Natural killer cell (primary cell): ENCODE measurements at regions of chr17 and their contacts with region 1.

Region 1: DNA sequence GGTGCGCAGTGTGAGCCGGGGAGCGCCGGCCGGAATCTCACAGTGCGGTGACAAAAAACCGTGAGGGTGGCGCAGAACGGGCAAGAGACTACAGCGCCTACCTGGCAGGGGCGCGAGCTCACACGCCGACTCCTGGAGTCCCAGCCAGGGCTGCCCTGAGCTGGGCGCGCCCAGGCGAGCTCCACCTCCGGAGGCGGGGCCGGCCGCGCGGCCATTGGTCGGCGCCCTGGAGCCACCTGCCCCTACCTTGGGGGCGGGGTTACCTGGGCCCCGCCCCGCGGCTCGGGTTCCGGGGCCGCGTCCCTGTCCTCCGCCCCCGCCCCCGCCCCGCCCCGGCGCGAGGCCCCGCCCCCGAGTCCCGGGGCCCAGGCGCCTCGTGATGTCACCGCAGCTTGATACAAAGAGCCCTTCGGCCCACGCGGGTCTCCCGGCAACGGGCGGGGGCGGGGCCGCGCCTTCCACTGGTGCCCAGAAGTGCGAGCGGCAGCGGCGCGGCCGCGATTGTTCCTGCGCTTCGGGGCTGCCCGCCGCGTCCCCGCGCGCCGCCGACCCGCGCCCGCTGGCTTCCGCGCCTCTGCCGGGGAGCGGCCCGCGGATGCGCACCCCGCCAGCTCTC is 96.3 kb downstream of the RAB11FIP4 start:
- DNase-seq: peak; percentile 92 to 98
- ATAC-seq: peak; percentile 88 to 96 (median 89)
- H3K4me3 ChIP-seq: peak overlapping the region; percentile 74
- H3K4me3 Mint-ChIP-seq: peak overlapping the region; percentile 91
- H3K27ac ChIP-seq: peak overlapping the region; percentile 69
- H3K27ac Mint-ChIP-seq: peak overlapping the region; percentile 89 to 97
- H3K4me1 ChIP-seq: peaks cover 54% of the 10 kb centered on the region
- H3K4me1 Mint-ChIP-seq: peaks cover 46 to 51% of the 10 kb centered on the region in 2 donors
- H3K27me3 ChIP-seq: no peaks in the 10 kb centered on the region
- H3K27me3 Mint-ChIP-seq: no peaks in the 10 kb centered on the region
- CTCF ChIP-seq: no peak

Region 2: GRCh38 chr17:31437720-31438420 is 49.9 kb before region 1 on chr17:
- intact Hi-C with region 1: loop called (anchors 2 kb)
- DNase-seq: no peak
- ATAC-seq: no peak
- H3K4me3 ChIP-seq: no peak overlapping the region
- H3K4me3 Mint-ChIP-seq: no peak overlapping the region
- H3K27ac ChIP-seq: no peak overlapping the region
- H3K27ac Mint-ChIP-seq: no peak overlapping the region
- H3K4me1 ChIP-seq: peaks cover 20% of the 10 kb centered on the region
- H3K4me1 Mint-ChIP-seq: peaks cover 6 to 16% of the 10 kb centered on the region in 2 donors
- H3K27me3 ChIP-seq: no peaks in the 10 kb centered on the region
- H3K27me3 Mint-ChIP-seq: peaks cover 0 to 7% of the 10 kb centered on the region in 2 donors
- CTCF ChIP-seq: no peak

Region 3: GRCh38 chr17:31452101-31452500 is 35.7 kb before region 1 on chr17:
- intact Hi-C with region 1: no loop called
- DNase-seq: no peak
- ATAC-seq: no peak
- H3K4me3 ChIP-seq: no peak overlapping the region
- H3K4me3 Mint-ChIP-seq: no peak overlapping the region
- H3K27ac ChIP-seq: no peak overlapping the region
- H3K27ac Mint-ChIP-seq: no peak overlapping the region
- H3K4me1 ChIP-seq: peaks cover 9% of the 10 kb centered on the region
- H3K4me1 Mint-ChIP-seq: no peaks in the 10 kb centered on the region
- H3K27me3 ChIP-seq: no peaks in the 10 kb centered on the region
- H3K27me3 Mint-ChIP-seq: peaks cover 0 to 8% of the 10 kb centered on the region in 2 donors
- CTCF ChIP-seq: no peak

Region 4: DNA sequence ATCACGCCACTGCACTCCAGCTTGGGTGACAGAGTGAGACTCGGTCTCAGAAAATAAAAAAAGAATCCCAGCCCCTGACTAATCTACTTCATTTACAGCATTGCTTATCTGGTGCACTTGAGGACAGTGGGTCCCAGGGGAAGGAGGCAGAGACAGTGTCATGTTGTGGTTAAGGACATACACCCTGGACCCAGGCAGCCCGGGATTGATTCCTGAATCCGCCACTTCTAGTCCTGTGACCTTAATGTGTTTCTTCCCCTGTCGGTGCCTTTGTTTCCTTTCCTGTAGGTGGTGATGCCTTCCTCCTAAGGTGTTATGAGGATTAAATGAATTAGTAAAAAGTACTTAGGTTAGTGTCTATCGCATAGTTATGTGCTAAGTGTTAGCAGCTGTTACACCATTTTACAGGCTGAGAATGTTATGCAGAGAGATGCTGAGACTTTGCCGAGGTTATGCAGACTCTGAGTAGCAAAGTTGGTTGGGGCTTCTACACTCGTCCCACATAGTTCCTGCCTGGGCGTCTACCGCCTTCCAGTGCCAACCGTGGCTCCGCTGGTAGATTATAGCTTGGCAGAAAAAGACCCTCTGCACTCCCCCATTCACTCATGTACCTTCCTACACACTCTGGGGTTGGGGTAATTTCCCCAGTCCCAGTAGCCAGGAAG is 21.5 kb before region 1 on chr17:
- intact Hi-C with region 1: no loop called
- DNase-seq: no peak
- ATAC-seq: no peak
- H3K4me3 ChIP-seq: no peak overlapping the region
- H3K4me3 Mint-ChIP-seq: no peak overlapping the region
- H3K27ac ChIP-seq: no peak overlapping the region
- H3K27ac Mint-ChIP-seq: no peak overlapping the region
- H3K4me1 ChIP-seq: peaks cover 31% of the 10 kb centered on the region
- H3K4me1 Mint-ChIP-seq: peaks cover 6 to 14% of the 10 kb centered on the region in 2 donors
- H3K27me3 ChIP-seq: no peaks in the 10 kb centered on the region
- H3K27me3 Mint-ChIP-seq: no peaks in the 10 kb centered on the region
- CTCF ChIP-seq: no peak

Region 5: GRCh38 chr17:31508288-31509094 is 20.7 kb after region 1 on chr17:
- intact Hi-C with region 1: loop called (anchors 1 kb)
- DNase-seq: peak; percentile 64 to 92
- ATAC-seq: peak; percentile 84 to 97 (median 90)
- H3K4me3 ChIP-seq: peak overlapping the region; percentile 27
- H3K4me3 Mint-ChIP-seq: peak overlapping the region; percentile 95
- H3K27ac ChIP-seq: peak overlapping the region; percentile 96
- H3K27ac Mint-ChIP-seq: peak overlapping the region; percentile 96 to 97
- H3K4me1 ChIP-seq: peaks cover 69% of the 10 kb centered on the region
- H3K4me1 Mint-ChIP-seq: peaks cover 60 to 68% of the 10 kb centered on the region in 2 donors
- H3K27me3 ChIP-seq: no peaks in the 10 kb centered on the region
- H3K27me3 Mint-ChIP-seq: no peaks in the 10 kb centered on the region
- CTCF ChIP-seq: peak; percentile 48

Region 6: DNA sequence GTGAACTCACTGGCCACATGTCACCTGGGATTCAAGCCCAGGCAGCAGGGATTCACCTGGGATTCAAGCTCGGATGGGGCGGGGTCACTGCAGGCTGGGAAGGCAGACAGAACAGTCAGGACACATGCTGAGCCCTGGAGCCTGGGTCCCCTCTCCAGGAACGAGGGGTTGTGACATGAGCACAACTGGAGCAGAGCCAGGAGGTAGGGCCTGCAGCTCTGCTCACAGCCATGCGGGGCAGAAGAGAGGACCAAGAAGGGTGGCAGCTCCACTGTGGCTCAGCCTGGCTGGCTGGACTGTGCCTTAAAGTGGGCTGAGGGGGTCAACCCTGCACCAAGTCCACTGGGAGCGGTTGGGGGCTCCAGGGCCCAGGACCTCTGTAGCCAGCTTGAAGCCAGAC is 53.8 kb after region 1 on chr17:
- intact Hi-C with region 1: no loop called
- DNase-seq: no peak
- ATAC-seq: no peak
- H3K4me3 ChIP-seq: no peak overlapping the region
- H3K4me3 Mint-ChIP-seq: no peak overlapping the region
- H3K27ac ChIP-seq: no peak overlapping the region
- H3K27ac Mint-ChIP-seq: no peak overlapping the region
- H3K4me1 ChIP-seq: peaks cover 19% of the 10 kb centered on the region
- H3K4me1 Mint-ChIP-seq: peaks cover 0 to 5% of the 10 kb centered on the region in 2 donors
- H3K27me3 ChIP-seq: no peaks in the 10 kb centered on the region
- H3K27me3 Mint-ChIP-seq: no peaks in the 10 kb centered on the region
- CTCF ChIP-seq: no peak